Activated CD4-positive, alpha-beta T cell treated with anti-CD3 and anti-CD28 coated beads for 36 hours (primary cell): ENCODE measurements at regions of chr13 and their contacts with region 1.

Region 1: DNA sequence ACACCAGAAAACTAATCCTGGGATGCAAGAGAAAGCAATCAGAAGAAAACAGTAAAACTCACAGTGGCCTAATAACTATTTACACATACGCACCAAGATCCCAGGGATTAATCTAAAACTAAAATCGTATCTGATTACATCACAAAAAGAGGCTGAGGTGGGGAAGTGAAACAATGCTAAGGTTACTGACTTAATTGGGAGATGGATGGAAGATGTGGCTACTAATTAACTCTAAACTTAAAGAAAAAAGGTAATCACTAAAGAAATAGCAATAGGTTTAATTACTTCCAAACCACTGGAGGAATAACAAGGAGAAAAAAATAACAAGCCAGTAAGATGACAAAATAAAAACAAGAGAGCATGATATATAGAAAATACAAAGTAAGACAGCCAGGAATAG is 50.4 kb downstream of the NUFIP1 start:
- DNase-seq: no peak
- ATAC-seq: no peak
- H3K4me3 Mint-ChIP-seq: no peak overlapping the region
- H3K27ac Mint-ChIP-seq: no peak overlapping the region
- H3K4me1 Mint-ChIP-seq: peaks cover 4% of the 10 kb centered on the region
- H3K27me3 Mint-ChIP-seq: no peaks in the 10 kb centered on the region

Region 2: DNA sequence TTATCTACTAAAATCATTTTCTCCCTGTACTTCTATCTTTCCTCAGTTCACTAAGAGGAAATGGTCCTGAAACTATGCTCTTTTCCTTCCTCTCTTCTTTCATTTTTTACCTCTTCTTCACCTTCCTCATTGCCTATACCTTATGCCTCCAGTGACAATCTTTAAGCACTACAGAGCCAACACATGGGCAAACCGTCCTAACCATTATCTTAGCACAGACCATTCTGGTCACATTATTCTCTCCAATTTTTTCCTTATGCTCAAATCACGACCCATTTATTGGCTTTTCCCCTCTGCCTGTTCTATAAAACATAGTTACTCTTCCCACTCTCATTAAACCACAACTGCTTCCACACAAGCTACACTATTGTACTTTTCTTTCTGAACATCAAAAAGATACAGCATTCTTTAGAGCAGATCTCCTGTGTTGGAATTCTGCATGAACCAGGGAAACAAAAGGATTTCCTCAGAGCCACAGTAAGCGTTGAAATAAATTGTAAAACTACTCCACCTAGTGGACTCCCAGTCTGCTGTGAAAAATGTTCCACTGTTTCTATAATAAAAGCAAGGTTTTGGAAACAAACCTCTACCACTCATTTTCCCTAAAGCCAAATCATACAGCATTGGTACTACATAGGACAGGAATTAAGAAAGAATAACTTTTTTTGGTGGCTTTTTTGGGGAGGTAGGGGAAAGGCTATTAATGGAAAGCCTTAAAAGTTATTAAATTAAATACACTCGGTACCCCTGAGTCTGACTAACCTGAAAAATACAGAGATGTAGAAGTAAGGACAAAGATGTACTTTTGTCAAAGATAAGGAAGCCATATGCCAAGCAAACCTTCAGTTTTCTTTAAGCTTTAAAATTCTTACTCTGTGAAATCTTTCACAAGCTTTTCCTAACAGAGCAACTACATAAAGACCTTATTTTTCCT is 31.0 kb after region 1 on chr13:
- CTCF ChIA-PET with region 1: interaction called, 11 read pairs
- POLR2A ChIA-PET with region 1: no interaction called
- intact Hi-C with region 1: no loop called
- DNase-seq: no peak
- ATAC-seq: no peak
- H3K4me3 Mint-ChIP-seq: no peak overlapping the region
- H3K27ac Mint-ChIP-seq: no peak overlapping the region
- H3K4me1 Mint-ChIP-seq: peaks cover 2% of the 10 kb centered on the region
- H3K27me3 Mint-ChIP-seq: no peaks in the 10 kb centered on the region

Region 3: DNA sequence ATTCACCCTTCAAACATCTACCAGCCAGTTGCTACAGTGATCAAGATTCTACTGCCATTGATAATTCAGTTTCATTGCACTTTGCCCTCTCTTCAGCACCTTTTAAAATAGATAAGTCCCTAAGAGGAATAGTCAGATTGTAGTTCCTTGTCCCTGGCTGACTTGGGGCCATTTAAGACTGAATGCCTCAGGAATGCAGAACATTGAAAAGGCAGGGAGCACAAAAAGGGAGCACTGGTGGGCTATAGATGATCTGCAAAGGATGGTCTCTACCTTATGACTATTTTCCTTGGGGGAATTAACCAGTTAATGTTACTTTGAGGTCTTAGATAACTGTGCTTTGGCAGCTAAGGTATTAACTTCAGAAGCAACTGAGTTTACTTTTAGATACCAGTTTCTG is 97.4 kb after region 1 on chr13:
- CTCF ChIA-PET with region 1: no interaction called
- POLR2A ChIA-PET with region 1: no interaction called
- intact Hi-C with region 1: no loop called
- DNase-seq: no peak
- ATAC-seq: no peak
- H3K4me3 Mint-ChIP-seq: no peak overlapping the region
- H3K27ac Mint-ChIP-seq: no peak overlapping the region
- H3K4me1 Mint-ChIP-seq: peaks cover 3% of the 10 kb centered on the region
- H3K27me3 Mint-ChIP-seq: no peaks in the 10 kb centered on the region